HEK293 (cell line): ENCODE measurements at regions of chr9 and their contacts with region 1.

Region 1: DNA sequence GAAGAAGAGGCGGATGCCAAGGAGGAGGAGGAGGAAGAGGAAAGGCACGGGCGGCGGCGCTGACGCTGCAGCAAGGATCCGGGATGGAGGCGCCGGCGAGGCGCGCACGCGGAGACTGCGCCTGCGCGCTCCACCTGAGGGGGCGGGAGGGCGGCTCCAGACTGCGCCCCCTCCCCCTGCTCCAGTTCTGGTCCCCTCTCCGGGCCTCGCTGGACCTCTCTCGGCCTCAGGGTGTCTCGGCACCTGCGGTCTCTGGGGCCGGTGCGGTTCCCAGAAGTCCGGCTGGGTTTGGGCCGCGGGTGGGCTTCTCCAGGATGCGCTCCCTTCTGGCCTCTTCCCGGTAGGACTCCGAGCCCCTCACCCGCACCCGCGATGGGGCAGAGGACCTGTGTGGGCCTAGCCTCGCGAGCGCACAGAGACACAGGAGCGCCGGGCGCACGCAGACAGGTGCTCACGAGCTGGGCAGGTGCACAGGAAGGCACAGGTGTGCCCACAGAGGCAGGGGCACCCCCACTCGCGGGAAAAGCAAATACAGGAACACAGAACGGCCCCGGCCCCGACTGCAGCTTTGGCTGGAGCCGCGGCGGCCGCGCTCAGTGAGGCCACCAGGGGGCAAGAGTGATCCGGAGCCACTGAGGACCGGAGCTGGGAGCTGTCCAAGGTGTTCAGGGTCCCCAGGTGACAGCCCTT is at the start of gene NPDC1:
- H3K4me3 ChIP-seq: peak within 1 kb of the TSS; percentile 58
- H3K27ac ChIP-seq: peak within 1 kb of the TSS; percentile 79; the same call in 1 of the 2 replicates
- H3K4me1 ChIP-seq: peaks cover 5% of the 10 kb centered on the region; the same call in 1 of the 2 replicates
- CTCF ChIP-seq: peak; percentile 87

Region 2: DNA sequence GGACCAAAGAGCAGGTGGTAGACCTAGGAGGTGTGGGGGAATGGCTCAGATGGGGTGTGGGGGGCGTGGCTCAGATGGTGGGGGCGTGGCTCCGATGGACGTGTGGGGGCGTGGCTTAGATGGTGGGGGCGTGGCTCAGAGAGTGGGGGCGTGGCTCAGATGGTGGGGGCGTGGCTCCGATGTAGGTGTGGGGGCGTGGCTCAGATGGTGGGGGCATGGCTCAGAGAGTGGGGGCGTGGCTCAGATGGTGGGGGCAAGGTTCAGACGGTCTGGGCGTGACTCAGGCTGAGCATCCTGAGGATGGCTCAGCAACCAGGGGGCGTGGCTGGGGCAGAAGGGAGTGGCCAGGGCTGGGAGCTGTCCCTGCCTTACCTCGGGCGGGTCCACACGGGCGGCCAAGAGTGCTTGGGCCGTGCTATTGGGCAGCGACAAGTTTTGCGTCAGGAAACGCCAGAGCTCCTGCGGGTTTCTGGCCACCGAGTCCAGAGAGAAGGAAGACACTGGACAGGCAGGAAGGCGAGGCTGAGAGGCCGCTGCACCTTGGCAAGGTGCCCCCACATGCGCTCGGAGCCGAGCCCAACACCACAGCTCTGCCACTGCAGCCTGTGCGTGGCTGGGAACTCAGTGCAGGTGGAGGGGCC is 24.1 kb before region 1 on chr9:
- CTCF ChIA-PET with region 1: interaction called, 11 read pairs
- POLR2A ChIA-PET with region 1: no interaction called
- H3K4me3 ChIP-seq: no peak overlapping the region
- H3K27ac ChIP-seq: no peak overlapping the region
- H3K4me1 ChIP-seq: no peaks in the 10 kb centered on the region; the same call in 1 of the 2 replicates
- CTCF ChIP-seq: no peak

Region 3: DNA sequence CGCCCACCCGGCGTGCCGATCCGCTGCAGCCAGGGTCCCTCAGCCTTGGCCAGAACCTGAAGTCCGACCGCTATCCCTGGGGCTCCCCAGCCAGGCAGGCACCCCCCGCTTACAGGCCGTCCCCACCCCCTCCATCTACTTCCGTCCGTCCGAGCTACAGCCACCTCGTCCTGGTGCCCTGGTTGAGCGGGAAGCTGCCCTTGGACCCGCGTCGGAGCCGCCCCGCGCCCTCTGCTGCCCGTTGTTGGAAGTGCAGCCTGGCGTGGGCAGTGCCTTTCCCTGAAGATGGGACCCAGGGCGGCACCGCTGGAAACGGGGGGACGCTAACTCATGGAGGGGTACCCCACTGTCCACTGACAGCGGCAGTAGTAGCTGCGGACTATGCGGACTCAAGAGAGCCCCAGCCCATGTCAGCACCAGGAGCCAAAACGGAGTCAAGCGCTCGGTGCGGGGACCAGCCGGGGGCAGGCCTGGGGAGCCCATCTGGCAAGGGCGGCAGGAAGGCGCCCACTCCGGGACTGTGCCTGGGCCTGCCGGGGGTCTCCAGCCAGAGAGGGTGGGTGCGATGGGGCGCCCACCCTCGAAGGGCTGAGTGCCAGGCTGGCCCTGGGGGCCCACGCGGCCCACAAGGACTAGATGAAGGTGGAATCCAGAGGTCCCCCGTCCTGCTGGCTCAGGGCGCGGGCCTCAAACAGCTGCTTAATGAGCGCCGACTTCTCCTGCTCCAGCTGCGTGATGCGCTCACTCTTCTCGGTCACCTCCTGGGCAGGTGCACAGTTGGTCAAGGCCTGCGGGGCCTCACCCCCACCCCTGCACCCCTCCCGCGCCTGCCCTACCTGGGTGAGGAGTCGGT is 18.0 kb after region 1 on chr9:
- CTCF ChIA-PET with region 1: interaction called, 237 read pairs
- POLR2A ChIA-PET with region 1: interaction called, 11 read pairs
- H3K4me3 ChIP-seq: no peak overlapping the region
- H3K27ac ChIP-seq: no peak overlapping the region
- H3K4me1 ChIP-seq: peaks cover 3% of the 10 kb centered on the region; the same call in 1 of the 2 replicates
- CTCF ChIP-seq: peak; percentile 95

Region 4: DNA sequence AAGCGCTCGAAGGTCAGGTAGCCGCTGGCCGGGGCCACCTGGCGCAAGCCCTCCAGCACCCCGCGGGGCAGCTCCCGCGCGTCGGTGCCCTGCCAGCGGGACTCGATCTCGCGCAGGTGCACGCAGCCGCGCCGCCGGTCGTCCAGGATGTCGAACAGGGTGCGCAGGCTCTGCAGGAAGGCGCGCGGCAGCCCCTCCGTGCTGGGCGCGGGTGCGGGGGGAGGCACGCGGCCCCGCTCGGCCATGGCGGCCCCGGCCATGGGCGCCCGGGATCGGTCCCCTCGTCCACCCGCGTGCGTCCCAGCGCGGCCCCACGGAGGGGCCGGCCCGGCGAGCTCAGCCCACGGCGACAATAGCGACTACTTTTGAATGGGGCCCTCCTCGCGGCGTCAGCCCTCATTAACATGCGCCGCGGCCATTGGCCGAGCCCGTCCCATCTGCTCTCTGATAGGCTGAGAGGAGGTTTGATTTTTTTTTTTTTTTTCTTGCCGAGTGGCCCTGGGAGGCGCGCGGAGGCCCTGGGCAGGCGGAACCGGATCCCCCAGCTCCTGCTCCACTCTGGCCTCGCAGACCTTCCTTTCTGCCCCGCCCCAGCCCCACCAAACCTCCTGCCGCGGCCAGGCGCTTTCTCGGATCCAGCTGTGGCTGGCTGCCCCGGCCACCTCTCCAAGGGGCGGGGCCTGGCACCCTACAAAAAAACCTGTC is 24.1 kb after region 1 on chr9 and contains the start of gene SAPCD2:
- CTCF ChIA-PET with region 1: interaction called, 237 read pairs
- POLR2A ChIA-PET with region 1: interaction called, 11 read pairs
- H3K4me3 ChIP-seq: peak within 1 kb of the TSS; percentile 38
- H3K27ac ChIP-seq: peak within 1 kb of the TSS; percentile 71
- H3K4me1 ChIP-seq: peaks cover 10% of the 10 kb centered on the region; the same call in 1 of the 2 replicates
- CTCF ChIP-seq: no peak